Naive thymus-derived CD4-positive, alpha-beta T cell (primary cell): ENCODE measurements at regions of chr9 and their contacts with region 1.

Region 1: DNA sequence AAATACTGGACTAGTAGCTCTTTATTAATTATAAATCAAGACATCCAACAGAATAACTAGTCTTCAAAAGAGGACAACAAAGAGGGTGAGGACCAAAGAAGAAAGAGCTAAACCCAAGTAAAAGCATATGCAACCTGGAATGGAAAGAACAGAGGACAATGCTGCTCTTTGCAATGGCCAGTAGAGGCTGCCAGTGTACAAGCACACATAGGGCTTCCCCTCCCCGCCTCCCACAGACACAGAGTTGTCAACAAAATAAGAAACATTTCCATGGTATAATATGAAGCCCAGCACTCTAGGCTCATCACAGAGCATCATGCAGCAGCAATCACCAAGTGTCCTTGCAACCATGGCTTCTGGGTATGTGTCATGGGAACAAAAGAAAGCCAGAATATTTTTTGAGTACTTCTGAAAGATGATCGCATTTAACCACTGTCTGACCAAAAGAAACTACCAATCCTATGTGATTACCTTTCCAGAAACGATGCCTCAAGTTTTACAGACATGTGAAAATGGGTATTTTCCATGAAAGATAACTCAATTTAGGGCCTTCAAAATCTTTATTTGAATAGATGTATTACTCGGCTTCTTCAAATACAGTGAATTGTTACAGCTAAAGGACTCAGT is 58.1 kb downstream of the RFX3 start:
- DNase-seq: peak; percentile 13 to 72 (median 53)
- ATAC-seq: peak; percentile 98
- H3K4me3 ChIP-seq: no peak overlapping the region
- H3K4me3 Mint-ChIP-seq: peak overlapping the region in 1 of 10 donors; percentile 39
- H3K27ac ChIP-seq: no peak overlapping the region
- H3K27ac Mint-ChIP-seq: peak overlapping the region in 3 of 9 donors; percentile 40 to 65 (median 53)
- H3K4me1 ChIP-seq: peaks cover 3 to 4% of the 10 kb centered on the region in 2 donors
- H3K4me1 Mint-ChIP-seq: peaks cover 3 to 25% (median 4%) of the 10 kb centered on the region in 7 donors
- H3K27me3 ChIP-seq: no peaks in the 10 kb centered on the region
- H3K27me3 Mint-ChIP-seq: no peaks in the 10 kb centered on the region

Region 2: GRCh38 chr9:3647652-3648051 is 179.9 kb after region 1 on chr9:
- CTCF ChIA-PET with region 1: interaction called, 6 read pairs
- POLR2A ChIA-PET with region 1: no interaction called
- intact Hi-C with region 1: loop called (anchors 1 kb)
- DNase-seq: peak in 4 of 9 donors; percentile 1 to 18 (median 3)
- ATAC-seq: no peak
- H3K4me3 ChIP-seq: no peak overlapping the region
- H3K4me3 Mint-ChIP-seq: no peak overlapping the region
- H3K27ac ChIP-seq: no peak overlapping the region
- H3K27ac Mint-ChIP-seq: no peak overlapping the region
- H3K4me1 ChIP-seq: no peaks in the 10 kb centered on the region
- H3K4me1 Mint-ChIP-seq: no peaks in the 10 kb centered on the region
- H3K27me3 ChIP-seq: no peaks in the 10 kb centered on the region
- H3K27me3 Mint-ChIP-seq: no peaks in the 10 kb centered on the region

Region 3: DNA sequence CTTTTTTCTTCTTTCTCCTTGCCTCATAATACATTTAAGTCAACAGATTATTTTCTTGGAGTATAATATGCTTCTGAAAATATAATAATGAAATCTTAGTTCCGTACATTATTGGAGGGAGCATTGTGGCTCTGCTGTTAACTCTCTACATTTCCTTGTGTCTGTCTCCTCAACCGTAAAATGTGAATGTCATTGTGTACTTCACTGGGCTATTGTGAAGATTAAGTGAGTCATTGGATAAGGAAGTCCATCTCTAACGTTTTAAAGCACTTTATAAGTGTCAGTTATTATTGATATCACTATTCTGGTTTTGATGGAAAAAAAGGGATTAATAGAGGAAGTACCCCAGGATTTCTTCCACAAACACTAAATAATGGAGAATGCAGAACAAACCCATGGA is 362.6 kb after region 1 on chr9:
- CTCF ChIA-PET with region 1: no interaction called
- POLR2A ChIA-PET with region 1: no interaction called
- intact Hi-C with region 1: loop called in 1 of 2 experiments (anchors 10 kb)
- DNase-seq: no peak
- ATAC-seq: no peak
- H3K4me3 ChIP-seq: no peak overlapping the region
- H3K4me3 Mint-ChIP-seq: no peak overlapping the region
- H3K27ac ChIP-seq: no peak overlapping the region
- H3K27ac Mint-ChIP-seq: no peak overlapping the region
- H3K4me1 ChIP-seq: no peaks in the 10 kb centered on the region
- H3K4me1 Mint-ChIP-seq: peaks cover 0 to 5% (median 0%) of the 10 kb centered on the region in 7 donors
- H3K27me3 ChIP-seq: no peaks in the 10 kb centered on the region
- H3K27me3 Mint-ChIP-seq: no peaks in the 10 kb centered on the region

Region 4: GRCh38 chr9:4228606-4229005 is 760.9 kb after region 1 on chr9:
- CTCF ChIA-PET with region 1: no interaction called
- POLR2A ChIA-PET with region 1: no interaction called
- intact Hi-C with region 1: loop called in 1 of 2 experiments (anchors 1 kb)
- DNase-seq: peak in 1 of 9 donors; percentile 16
- ATAC-seq: peak; percentile 22
- H3K4me3 ChIP-seq: no peak overlapping the region
- H3K4me3 Mint-ChIP-seq: no peak overlapping the region
- H3K27ac ChIP-seq: no peak overlapping the region
- H3K27ac Mint-ChIP-seq: no peak overlapping the region
- H3K4me1 ChIP-seq: no peaks in the 10 kb centered on the region
- H3K4me1 Mint-ChIP-seq: peaks cover 0 to 28% (median 4%) of the 10 kb centered on the region in 7 donors
- H3K27me3 ChIP-seq: no peaks in the 10 kb centered on the region
- H3K27me3 Mint-ChIP-seq: peaks cover 0 to 10% (median 2%) of the 10 kb centered on the region in 5 donors

Region 5: GRCh38 chr9:4339357-4339756 is 871.7 kb after region 1 on chr9:
- CTCF ChIA-PET with region 1: no interaction called
- POLR2A ChIA-PET with region 1: no interaction called
- intact Hi-C with region 1: loop called (anchors 2 to 5 kb)
- DNase-seq: peak; percentile 62 to 84 (median 77)
- ATAC-seq: peak; percentile 90
- H3K4me3 ChIP-seq: no peak overlapping the region
- H3K4me3 Mint-ChIP-seq: peak overlapping the region in 9 of 10 donors; percentile 10 to 70 (median 48)
- H3K27ac ChIP-seq: no peak overlapping the region
- H3K27ac Mint-ChIP-seq: peak overlapping the region; percentile 16 to 92 (median 44)
- H3K4me1 ChIP-seq: no peaks in the 10 kb centered on the region
- H3K4me1 Mint-ChIP-seq: peaks cover 3 to 8% (median 7%) of the 10 kb centered on the region in 7 donors
- H3K27me3 ChIP-seq: no peaks in the 10 kb centered on the region
- H3K27me3 Mint-ChIP-seq: peaks cover 0 to 2% (median 0%) of the 10 kb centered on the region in 5 donors